ENCODE measurements at regions of chr4 and their contacts with region 1.

Region 1: GRCh38 chr4:26319467-26319948 is 1.3 kb upstream of the RBPJ start:
- DNase-seq: peak; percentile 99
- H3K4me3 Mint-ChIP-seq: peak overlapping the region; percentile 97
- H3K27ac Mint-ChIP-seq: peak overlapping the region; percentile 99
- H3K4me1 Mint-ChIP-seq: peaks cover 26% of the 10 kb centered on the region
- H3K27me3 Mint-ChIP-seq: no peaks in the 10 kb centered on the region

Region 2: DNA sequence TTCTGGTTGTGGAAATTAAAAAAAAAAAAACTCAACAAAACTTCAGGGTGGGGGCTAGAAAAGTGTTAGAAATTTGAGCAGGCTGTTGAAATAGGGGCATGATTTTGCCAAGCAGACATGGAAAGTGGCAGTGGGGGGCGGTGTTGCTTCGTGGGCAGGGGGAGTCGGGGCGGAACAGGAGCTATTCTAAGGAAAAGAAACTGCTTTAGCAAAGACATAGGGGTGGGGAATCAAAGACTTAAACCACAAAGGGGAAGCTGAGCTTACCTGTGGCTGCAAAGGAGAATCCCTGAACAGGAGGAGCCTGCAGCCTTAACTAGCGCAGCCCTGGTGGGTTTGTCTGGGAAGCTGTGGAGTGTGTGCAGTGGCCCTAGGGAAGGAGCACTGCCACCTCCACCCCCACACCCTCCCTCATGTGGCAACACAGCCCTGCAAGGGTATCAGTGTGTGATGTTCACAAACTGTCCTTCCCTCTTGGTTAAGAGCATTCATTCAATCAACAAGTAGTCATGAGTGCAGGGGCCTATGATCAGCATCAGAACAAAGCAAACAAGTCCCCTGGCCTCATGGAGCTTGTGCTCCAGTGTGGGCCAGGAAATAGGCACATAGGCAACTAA is 477.2 kb before region 1 on chr4:
- CTCF ChIA-PET with region 1: no interaction called
- intact Hi-C with region 1: loop called (anchors 5 kb)
- DNase-seq: peak; percentile 65
- H3K4me3 Mint-ChIP-seq: no peak overlapping the region
- H3K27ac Mint-ChIP-seq: no peak overlapping the region
- H3K4me1 Mint-ChIP-seq: peaks cover 40% of the 10 kb centered on the region
- H3K27me3 Mint-ChIP-seq: no peaks in the 10 kb centered on the region

Region 3: DNA sequence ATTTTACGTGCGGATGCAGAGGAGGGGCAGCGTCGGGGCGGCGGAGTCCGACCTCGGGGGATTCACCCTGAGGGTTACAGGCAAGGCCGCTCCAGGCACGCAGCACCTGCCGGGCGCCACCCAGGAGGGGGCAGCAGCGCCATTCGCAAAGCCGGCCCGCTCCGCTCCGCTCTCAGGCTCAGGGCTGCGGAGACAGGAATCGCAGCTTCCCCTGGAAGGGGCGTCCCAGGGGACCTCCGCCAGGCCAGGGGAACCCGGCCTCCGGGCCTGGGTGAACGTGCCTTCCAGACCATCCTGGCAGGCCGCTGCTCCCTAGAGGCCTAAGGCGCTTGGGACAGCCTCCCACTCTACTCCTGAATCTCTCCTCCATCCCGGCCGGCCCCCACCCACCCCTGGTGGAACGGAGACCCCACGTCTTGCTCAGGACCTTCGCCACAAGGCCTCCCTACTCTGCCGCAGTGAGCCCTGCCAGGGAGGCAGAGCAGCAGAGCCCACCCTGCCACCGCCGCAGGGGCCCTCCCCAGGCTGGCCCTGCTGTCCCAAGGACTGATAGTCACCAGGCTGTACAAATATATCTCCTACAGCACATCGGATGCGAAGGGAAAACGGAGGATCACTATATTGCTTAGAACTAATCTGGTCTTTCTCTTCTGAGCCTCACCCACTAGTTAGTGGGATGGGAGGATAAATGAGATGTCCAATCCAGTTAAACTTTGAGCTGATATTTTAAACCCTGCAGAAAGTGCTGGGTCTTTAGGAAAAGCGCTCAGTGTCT is 290.5 kb before region 1 on chr4:
- CTCF ChIA-PET with region 1: interaction called, 11 read pairs
- intact Hi-C with region 1: no loop called
- DNase-seq: peak; percentile 80
- H3K4me3 Mint-ChIP-seq: no peak overlapping the region
- H3K27ac Mint-ChIP-seq: no peak overlapping the region
- H3K4me1 Mint-ChIP-seq: peaks cover 12% of the 10 kb centered on the region
- H3K27me3 Mint-ChIP-seq: peaks cover 16% of the 10 kb centered on the region

Region 4: GRCh38 chr4:26150948-26151347 is 168.6 kb before region 1 on chr4:
- CTCF ChIA-PET with region 1: no interaction called
- intact Hi-C with region 1: loop called (anchors 1 kb)
- DNase-seq: peak; percentile 54
- H3K4me3 Mint-ChIP-seq: no peak overlapping the region
- H3K27ac Mint-ChIP-seq: peak overlapping the region; percentile 75
- H3K4me1 Mint-ChIP-seq: peaks cover 16% of the 10 kb centered on the region
- H3K27me3 Mint-ChIP-seq: peaks cover 10% of the 10 kb centered on the region

Region 5: GRCh38 chr4:26583865-26584652 is 264.6 kb after region 1 on chr4 and contains the start of gene TBC1D19:
- CTCF ChIA-PET with region 1: no interaction called
- intact Hi-C with region 1: loop called (anchors 2 kb)
- DNase-seq: peak; percentile 92
- H3K4me3 Mint-ChIP-seq: peak within 1 kb of the TSS; percentile 93
- H3K27ac Mint-ChIP-seq: peak within 1 kb of the TSS; percentile 92
- H3K4me1 Mint-ChIP-seq: peaks cover 32% of the 10 kb centered on the region
- H3K27me3 Mint-ChIP-seq: no peaks in the 10 kb centered on the region
- total RNA-seq, gene TBC1D19: 3.8 to 4.1 TPM